SK-N-SH (cell line): ENCODE measurements at regions of chr6 and their contacts with region 1.

Region 1: DNA sequence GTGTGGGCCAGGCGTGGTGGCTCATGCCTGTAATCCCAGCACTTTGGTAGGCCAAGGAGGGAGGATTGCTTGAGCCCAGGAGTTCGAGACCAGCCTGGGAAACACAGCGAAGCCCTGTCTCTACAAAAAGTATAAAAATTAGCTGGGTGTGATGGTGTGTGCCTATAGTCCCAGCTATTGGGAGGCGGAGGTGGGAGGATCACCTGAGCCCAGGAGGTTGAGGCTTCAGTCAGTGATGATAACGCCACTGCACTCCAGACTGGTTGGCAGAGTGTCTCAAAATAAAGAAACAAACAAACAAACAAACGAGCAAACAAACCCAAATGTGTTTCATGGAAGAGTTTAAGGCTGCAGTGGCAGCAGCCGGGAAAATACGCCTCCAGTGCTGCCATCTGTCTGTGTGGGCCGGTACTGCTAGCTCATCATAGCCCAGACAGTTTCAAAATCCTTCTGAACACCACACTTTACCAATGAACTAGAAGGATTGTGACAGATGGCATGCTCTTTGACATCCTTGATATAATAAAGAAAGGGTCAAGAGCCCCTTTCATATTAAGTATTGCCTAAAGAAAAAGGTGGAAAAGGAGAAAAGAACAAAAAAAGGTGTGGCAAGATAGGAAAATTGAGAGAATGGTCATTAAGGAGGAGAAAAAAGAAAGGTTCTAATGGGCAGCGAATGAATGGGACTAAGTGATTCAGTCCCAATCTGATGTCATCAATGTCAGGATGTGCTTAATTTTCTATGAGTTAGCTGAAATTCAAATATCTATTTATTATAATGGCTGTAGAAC is 298.6 kb downstream of the SYNE1 start:
- DNase-seq: peak; percentile 59
- H3K4me3 ChIP-seq: no peak overlapping the region; a peak in 1 of 4 replicates
- H3K27ac ChIP-seq: no peak overlapping the region
- H3K4me1 ChIP-seq: no peaks in the 10 kb centered on the region
- H3K27me3 ChIP-seq: no peaks in the 10 kb centered on the region
- CTCF ChIP-seq: peak; percentile 76
- EP300 ChIP-seq: no peak
- RAD21 ChIP-seq: peak; percentile 65

Region 2: GRCh38 chr6:151765444-151765886 is 573.1 kb before region 1 on chr6:
- CTCF ChIA-PET with region 1: interaction called, 12 read pairs
- POLR2A ChIA-PET with region 1: no interaction called
- DNase-seq: peak; percentile 61
- H3K4me3 ChIP-seq: peak overlapping the region in 1 of 2 experiments; percentile 14; a peak in 1 of 4 replicates
- H3K27ac ChIP-seq: no peak overlapping the region
- H3K4me1 ChIP-seq: no peaks in the 10 kb centered on the region; a peak in 2 of 4 replicates
- H3K27me3 ChIP-seq: no peaks in the 10 kb centered on the region
- CTCF ChIP-seq: peak; percentile 76
- EP300 ChIP-seq: no peak
- RAD21 ChIP-seq: peak; percentile 73

Region 3: DNA sequence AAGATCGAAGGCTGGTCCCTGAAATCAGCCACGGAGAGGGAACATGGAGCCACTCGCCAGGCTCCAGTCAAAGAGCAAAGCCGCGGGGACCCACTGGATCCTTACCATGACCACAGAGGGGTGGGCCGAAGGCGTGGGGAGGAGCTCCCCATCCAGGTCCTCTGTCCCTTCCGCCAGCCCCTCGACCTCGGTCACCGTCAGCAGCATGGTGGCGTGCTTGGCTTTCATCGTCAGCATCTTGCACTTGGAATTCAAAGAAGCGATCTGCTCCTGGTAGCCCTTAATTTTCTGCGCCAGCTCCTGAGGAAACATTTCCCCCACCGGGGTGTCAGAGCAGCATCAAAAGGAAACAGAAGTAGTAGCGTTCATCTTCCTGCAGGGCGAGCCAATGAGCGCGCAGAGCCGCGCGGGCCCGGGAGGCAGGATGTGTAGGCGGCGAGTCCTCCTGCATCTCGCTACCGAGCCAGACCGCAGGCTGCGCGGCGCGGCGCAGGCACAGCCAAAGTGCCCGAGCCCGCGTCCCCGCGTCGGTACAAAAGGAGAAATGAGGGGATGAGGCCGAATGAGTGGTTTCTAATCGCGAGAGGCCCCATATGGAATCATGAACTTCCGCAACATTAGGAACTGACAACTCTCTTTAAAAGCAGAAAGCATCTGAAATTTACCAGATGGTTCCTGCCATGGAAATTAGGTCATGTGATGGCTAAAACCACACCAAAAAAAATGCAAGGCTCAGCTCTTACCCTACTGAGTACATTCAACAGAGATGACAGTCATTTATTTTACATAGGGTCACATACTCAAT is 36.6 kb before region 1 on chr6:
- CTCF ChIA-PET with region 1: interaction called, 24 read pairs
- POLR2A ChIA-PET with region 1: interaction called, 3 read pairs
- DNase-seq: peak; percentile 84
- H3K4me3 ChIP-seq: peak overlapping the region; percentile 72 to 79
- H3K27ac ChIP-seq: peak overlapping the region; percentile 81 to 97
- H3K4me1 ChIP-seq: peaks cover 3 to 11% of the 10 kb centered on the region in 2 experiments; a peak in 3 of 4 replicates
- H3K27me3 ChIP-seq: no peaks in the 10 kb centered on the region
- CTCF ChIP-seq: peak; percentile 56
- EP300 ChIP-seq: 0 out of 4 replicates have a peak, but pooled peaks of 1 of the 2 experiments have one; percentile 4
- RAD21 ChIP-seq: peak; percentile 46

Region 4: GRCh38 chr6:152323376-152323775 is 15.2 kb before region 1 on chr6:
- CTCF ChIA-PET with region 1: interaction called, 22 read pairs
- POLR2A ChIA-PET with region 1: no interaction called
- DNase-seq: no peak
- H3K4me3 ChIP-seq: no peak overlapping the region
- H3K27ac ChIP-seq: no peak overlapping the region
- H3K4me1 ChIP-seq: no peaks in the 10 kb centered on the region
- H3K27me3 ChIP-seq: no peaks in the 10 kb centered on the region
- CTCF ChIP-seq: no peak
- EP300 ChIP-seq: no peak
- RAD21 ChIP-seq: no peak

Region 5: DNA sequence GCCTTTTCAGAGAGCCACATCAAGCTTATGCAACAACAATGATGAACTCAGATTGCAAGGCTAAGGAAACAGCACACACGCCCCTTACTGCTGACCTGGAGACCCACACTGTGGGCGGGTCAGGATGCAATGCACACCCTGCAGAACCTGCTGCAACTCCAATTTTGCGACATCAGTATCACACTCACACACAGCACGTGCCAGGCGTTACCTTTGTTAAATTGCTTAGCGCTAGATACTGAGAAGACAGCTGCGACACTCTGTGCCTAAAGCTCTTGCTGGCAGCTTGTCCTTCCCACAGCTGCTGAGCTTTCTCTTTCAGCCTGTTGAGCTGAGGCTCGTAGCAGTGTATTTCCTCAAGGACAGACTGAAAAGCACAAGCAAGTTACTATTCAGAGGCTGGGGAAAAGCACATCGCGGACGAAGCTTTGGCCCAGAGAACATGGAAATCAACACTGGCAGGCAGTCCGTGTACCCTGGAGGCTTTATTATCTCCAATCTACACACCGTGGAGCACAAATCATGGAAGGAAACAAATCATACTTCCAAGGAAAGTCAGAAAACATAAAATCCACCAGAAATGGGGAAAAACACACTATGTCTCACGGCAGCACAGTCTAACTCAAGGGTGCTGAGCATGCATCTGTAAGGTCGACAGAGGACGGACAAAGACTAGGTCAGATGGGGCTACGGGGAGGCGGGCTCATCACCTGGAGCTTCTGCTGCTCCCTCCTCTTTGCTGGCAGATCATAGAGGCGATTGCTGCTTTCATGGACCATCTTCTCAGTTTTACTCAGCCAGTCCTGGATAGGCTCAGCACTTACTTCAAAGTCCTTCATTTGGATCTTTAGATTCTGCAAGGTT is 30.5 kb after region 1 on chr6:
- CTCF ChIA-PET with region 1: interaction called, 12 read pairs
- POLR2A ChIA-PET with region 1: no interaction called
- DNase-seq: no peak
- H3K4me3 ChIP-seq: no peak overlapping the region
- H3K27ac ChIP-seq: no peak overlapping the region
- H3K4me1 ChIP-seq: peaks cover 0 to 6% of the 10 kb centered on the region in 2 experiments; a peak in 1 of 4 replicates
- H3K27me3 ChIP-seq: no peaks in the 10 kb centered on the region
- CTCF ChIP-seq: no peak
- EP300 ChIP-seq: no peak
- RAD21 ChIP-seq: no peak